CD4-positive, alpha-beta T cell (primary cell): ENCODE measurements at regions of chr20 and their contacts with region 1.

Region 1: DNA sequence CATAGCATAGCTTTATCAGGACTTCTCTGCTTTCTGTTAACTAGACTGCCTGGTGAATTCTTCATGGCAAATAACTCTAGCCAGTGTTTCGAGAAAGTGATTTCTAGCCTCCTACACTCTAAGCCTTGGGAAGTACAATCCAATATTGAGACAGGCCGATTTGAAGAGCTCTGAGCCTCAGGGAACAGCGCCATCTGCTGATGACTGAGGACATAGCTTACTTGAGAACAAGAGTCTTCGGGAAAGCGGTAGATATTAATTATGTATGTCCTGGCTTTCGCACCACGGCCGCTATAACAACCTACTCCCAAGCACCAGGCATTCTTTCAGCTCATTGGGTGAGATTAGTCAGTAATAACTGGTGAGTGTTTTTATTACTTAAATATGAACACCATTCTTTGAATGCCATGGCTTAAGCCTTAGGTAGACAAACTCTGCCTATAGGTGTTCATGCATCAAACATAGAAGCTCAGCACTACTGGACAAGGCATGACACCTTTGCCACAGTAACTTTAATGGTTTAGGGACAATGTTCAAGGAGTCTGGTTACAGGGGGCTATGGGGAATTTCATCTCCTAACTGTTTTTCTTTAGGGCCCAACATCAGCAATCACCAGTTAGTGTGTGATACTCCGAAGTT is 518.6 kb downstream of the BMP2 start:
- DNase-seq: peak in 4 of 14 experiments; percentile 1 to 15 (median 9)
- ATAC-seq: no peak
- H3K4me3 ChIP-seq: no peak overlapping the region
- H3K4me3 Mint-ChIP-seq: no peak overlapping the region
- H3K27ac ChIP-seq: no peak overlapping the region
- H3K27ac Mint-ChIP-seq: no peak overlapping the region
- H3K4me1 ChIP-seq: no peaks in the 10 kb centered on the region
- H3K4me1 Mint-ChIP-seq: no peaks in the 10 kb centered on the region
- H3K27me3 ChIP-seq: no peaks in the 10 kb centered on the region
- H3K27me3 Mint-ChIP-seq: no peaks in the 10 kb centered on the region
- CTCF ChIP-seq: no peak

Region 2: DNA sequence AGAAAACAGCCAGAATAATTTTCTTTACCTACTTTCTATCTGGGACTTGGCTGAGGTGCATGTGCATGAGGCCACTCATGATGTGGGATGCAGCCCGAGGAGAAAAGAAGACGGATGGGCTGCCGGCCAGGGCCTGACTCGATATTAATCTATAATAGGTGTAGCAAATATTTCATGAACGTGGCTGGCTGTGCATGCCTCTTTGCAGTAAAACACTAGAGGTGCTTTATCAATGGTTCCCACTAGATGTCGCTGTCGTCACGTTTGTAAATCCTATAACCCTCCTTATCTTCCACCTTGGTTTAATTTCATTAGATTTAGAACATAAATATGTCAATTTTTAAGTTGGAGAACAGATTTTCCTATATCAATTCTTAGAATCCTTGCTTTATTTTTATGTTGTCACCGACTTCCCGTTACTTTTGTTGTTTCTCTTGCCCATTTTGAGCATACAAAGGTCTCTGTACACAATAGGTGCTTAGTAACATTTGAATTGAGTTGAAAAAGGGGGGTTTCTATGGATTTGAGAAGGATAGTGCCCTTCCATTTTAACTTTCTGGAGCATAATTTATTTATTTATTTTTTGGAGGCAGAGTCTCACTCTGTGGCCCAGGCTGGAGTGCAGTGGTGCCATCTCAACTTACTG is 1143.6 kb before region 1 on chr20:
- CTCF ChIA-PET with region 1: no interaction called
- POLR2A ChIA-PET with region 1: no interaction called
- intact Hi-C with region 1: loop called in 1 of 2 experiments (anchors 10 kb)
- DNase-seq: peak in 12 of 14 experiments; percentile 1 to 70 (median 28)
- ATAC-seq: no peak
- H3K4me3 ChIP-seq: no peak overlapping the region
- H3K4me3 Mint-ChIP-seq: no peak overlapping the region
- H3K27ac ChIP-seq: no peak overlapping the region
- H3K27ac Mint-ChIP-seq: no peak overlapping the region
- H3K4me1 ChIP-seq: no peaks in the 10 kb centered on the region
- H3K4me1 Mint-ChIP-seq: no peaks in the 10 kb centered on the region
- H3K27me3 ChIP-seq: peaks cover 4 to 9% of the 10 kb centered on the region in 2 experiments
- H3K27me3 Mint-ChIP-seq: peaks cover 32% of the 10 kb centered on the region
- CTCF ChIP-seq: peak; percentile 86

Region 3: DNA sequence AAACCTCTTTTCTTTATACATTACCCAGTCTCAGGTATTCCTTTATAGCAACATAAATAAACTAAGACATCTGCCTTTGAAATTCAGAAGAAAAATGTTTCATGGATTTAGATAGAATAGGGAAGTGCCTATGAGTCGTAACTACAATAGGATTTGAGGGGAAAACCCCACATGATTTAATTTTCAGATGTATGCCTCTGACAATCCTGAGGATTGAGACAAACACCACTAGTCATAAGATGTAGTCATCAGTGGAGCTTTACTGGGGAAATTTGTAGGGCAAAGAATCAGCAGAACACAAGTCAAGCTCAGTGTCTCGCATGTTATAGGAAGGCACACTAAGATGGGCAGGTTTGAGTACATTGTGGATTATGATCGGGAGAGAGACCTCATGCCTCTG is 47.8 kb after region 1 on chr20:
- CTCF ChIA-PET with region 1: no interaction called
- POLR2A ChIA-PET with region 1: no interaction called
- intact Hi-C with region 1: no loop called
- DNase-seq: no peak
- ATAC-seq: no peak
- H3K4me3 ChIP-seq: no peak overlapping the region
- H3K4me3 Mint-ChIP-seq: no peak overlapping the region
- H3K27ac ChIP-seq: no peak overlapping the region
- H3K27ac Mint-ChIP-seq: no peak overlapping the region
- H3K4me1 ChIP-seq: no peaks in the 10 kb centered on the region
- H3K4me1 Mint-ChIP-seq: no peaks in the 10 kb centered on the region
- H3K27me3 ChIP-seq: no peaks in the 10 kb centered on the region
- H3K27me3 Mint-ChIP-seq: no peaks in the 10 kb centered on the region
- CTCF ChIP-seq: no peak